ENCODE measurements at regions of chr9 and their contacts with region 1.

Region 1: DNA sequence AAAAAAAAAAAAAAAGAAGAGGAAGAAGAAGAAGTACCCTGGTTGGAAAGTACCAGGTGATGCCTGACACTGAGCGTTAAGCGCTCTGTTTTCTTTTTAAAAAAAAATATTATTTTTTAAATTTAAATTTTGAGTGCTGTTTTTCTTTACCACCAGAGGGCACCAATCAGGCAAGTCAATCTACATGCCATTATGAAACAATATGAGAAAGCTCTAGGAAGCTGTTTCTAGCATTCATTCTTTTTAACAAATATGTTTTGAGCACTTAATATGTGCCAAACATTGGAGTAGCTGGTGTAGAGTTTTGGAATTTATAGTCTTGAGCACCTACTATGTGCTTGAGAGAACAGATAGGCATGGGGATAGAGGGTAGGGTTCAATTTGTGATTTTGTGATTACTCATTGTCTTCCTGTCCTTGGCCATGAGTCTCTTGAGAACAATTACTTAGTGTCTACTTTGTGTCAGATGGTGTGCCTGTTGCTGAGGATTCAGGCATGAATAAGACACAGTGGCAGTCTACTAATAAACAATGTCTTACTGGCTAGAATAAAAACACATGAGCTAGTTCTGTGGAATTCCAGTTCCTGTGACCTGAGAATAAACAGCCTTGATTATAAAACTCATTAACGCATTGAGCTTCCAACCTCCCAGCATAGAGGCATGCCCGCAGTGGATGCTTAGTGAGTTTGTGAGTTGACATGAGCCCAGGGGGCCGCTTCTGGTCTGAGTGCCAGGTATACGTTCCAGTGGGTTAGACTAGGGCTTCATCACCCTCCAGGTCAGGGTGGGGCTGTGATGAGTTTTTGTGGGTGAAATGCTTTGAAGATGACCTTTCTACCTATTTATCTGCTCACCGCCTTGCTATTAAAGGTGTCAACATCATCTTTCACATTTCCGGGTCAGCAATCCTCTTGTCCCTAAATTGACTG is 3.0 kb upstream of the UBE2R2 start:
- DNase-seq: peak; percentile 30
- ATAC-seq: no peak
- H3K4me3 Mint-ChIP-seq: no peak overlapping the region
- H3K27ac Mint-ChIP-seq: peak overlapping the region; percentile 52
- H3K4me1 Mint-ChIP-seq: peaks cover 28% of the 10 kb centered on the region
- H3K27me3 Mint-ChIP-seq: peaks cover 2% of the 10 kb centered on the region
- CTCF ChIP-seq: peak; percentile 76

Region 2: DNA sequence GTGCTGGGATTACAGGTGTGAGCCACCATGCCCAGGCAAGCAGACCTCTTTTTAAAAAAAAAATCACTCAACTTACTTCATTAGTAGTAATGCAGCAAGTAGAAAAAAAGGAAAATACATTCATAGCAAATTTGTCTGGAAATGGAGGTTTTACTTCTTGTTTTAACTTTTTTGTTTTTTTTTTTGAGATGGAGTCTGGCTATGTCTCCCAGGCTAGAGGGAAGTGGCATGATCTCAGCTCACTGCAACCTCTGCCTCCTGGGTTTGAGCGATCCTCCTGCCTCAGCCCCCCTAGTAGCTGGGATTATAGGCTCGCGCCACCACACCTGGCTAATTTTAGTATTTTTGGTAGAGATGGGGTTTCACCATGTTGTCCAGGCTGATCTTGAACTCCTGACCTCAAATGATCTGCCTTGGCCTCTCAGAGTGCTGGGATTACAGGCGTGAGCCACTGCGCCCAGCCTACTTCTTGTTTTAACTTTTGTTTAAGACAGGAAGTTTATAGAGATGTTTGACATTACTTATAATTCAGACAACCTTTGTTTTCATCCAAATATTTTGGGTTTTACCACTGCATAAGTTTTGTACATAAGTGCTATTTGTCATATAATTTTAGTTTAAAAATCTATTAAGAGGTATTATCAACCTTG is 29.5 kb after region 1 on chr9:
- CTCF ChIA-PET with region 1: interaction called, 10 read pairs
- POLR2A ChIA-PET with region 1: interaction called, 3 read pairs
- intact Hi-C with region 1: no loop called
- DNase-seq: no peak
- ATAC-seq: no peak
- H3K4me3 Mint-ChIP-seq: no peak overlapping the region
- H3K27ac Mint-ChIP-seq: no peak overlapping the region
- H3K4me1 Mint-ChIP-seq: peaks cover 31% of the 10 kb centered on the region
- H3K27me3 Mint-ChIP-seq: no peaks in the 10 kb centered on the region
- CTCF ChIP-seq: no peak

Region 3: GRCh38 chr9:33852216-33852826 is 38.3 kb after region 1 on chr9:
- CTCF ChIA-PET with region 1: interaction called, 38 read pairs
- POLR2A ChIA-PET with region 1: no interaction called
- intact Hi-C with region 1: loop called (anchors 1 kb)
- DNase-seq: peak; percentile 67
- ATAC-seq: no peak
- H3K4me3 Mint-ChIP-seq: no peak overlapping the region
- H3K27ac Mint-ChIP-seq: no peak overlapping the region
- H3K4me1 Mint-ChIP-seq: peaks cover 34% of the 10 kb centered on the region
- H3K27me3 Mint-ChIP-seq: no peaks in the 10 kb centered on the region
- CTCF ChIP-seq: peak; percentile 52

Region 4: GRCh38 chr9:33858346-33858885 is 44.4 kb after region 1 on chr9:
- CTCF ChIA-PET with region 1: interaction called, 13 read pairs
- POLR2A ChIA-PET with region 1: no interaction called
- intact Hi-C with region 1: no loop called
- DNase-seq: no peak
- ATAC-seq: no peak
- H3K4me3 Mint-ChIP-seq: no peak overlapping the region
- H3K27ac Mint-ChIP-seq: no peak overlapping the region
- H3K4me1 Mint-ChIP-seq: peaks cover 38% of the 10 kb centered on the region
- H3K27me3 Mint-ChIP-seq: no peaks in the 10 kb centered on the region
- CTCF ChIP-seq: no peak

Region 5: DNA sequence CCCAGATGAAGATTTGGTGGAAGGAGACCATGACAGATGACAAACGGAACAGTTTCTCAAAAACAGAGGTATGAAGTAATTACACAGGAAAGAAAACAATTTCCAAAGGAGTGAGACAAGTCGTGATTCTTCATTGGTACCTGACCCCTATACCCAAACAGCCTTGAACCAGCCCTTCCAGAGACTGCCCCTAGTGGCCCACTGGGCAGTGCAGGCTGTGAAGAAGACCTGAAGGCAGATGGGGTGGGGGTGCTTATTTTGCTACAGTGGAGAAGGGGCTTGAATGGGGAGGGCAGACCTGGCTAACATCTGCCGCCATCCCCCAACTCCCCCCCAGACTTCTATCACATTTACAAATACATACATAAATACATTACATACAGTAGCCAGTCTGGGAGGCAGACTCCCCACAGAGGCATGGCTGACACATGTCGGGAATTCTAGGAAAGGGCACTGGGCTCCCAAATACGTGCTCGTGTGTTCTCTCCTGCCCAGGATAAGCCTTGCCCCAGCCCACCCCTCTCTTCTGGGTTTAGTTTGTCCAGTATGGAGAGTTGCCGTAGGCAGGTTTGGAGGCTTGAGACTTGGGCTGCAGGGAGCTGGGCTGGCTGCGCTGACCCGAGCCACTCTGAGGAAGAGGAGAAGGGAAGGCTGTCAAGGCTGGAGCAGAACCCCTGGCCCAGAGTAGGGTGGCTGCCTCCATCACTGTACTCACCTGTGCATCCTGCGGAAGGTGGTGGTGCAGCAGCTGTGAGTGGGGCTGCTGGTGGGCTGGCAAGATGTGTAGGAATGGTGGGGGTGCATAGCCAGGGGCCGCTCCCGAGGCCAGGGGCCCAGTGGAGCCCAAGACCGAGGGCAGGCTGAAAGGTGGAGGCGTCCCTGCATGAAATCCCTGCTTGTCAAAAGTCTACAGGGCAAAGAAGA is 108.3 kb after region 1 on chr9:
- CTCF ChIA-PET with region 1: interaction called, 10 read pairs
- POLR2A ChIA-PET with region 1: interaction called, 3 read pairs
- intact Hi-C with region 1: no loop called
- DNase-seq: peak; percentile 43
- ATAC-seq: peak; percentile 65
- H3K4me3 Mint-ChIP-seq: no peak overlapping the region
- H3K27ac Mint-ChIP-seq: peak overlapping the region; percentile 45
- H3K4me1 Mint-ChIP-seq: no peaks in the 10 kb centered on the region
- H3K27me3 Mint-ChIP-seq: no peaks in the 10 kb centered on the region
- CTCF ChIP-seq: peak; percentile 62

Measured in activated CD8-positive, alpha-beta T cell treated with anti-CD3 and anti-CD28 coated beads for 36 hours (primary cell).